Activated CD4-positive, alpha-beta T cell treated with anti-CD3 and anti-CD28 coated beads for 36 hours (primary cell): ENCODE measurements at regions of chr2 and their contacts with region 1.

Region 1: GRCh38 chr2:160022162-160022561 is 40.3 kb downstream of the PLA2R1 start:
- DNase-seq: no peak
- ATAC-seq: no peak
- H3K4me3 Mint-ChIP-seq: no peak overlapping the region
- H3K27ac Mint-ChIP-seq: no peak overlapping the region
- H3K4me1 Mint-ChIP-seq: no peaks in the 10 kb centered on the region
- H3K27me3 Mint-ChIP-seq: peaks cover 2% of the 10 kb centered on the region

Region 2: DNA sequence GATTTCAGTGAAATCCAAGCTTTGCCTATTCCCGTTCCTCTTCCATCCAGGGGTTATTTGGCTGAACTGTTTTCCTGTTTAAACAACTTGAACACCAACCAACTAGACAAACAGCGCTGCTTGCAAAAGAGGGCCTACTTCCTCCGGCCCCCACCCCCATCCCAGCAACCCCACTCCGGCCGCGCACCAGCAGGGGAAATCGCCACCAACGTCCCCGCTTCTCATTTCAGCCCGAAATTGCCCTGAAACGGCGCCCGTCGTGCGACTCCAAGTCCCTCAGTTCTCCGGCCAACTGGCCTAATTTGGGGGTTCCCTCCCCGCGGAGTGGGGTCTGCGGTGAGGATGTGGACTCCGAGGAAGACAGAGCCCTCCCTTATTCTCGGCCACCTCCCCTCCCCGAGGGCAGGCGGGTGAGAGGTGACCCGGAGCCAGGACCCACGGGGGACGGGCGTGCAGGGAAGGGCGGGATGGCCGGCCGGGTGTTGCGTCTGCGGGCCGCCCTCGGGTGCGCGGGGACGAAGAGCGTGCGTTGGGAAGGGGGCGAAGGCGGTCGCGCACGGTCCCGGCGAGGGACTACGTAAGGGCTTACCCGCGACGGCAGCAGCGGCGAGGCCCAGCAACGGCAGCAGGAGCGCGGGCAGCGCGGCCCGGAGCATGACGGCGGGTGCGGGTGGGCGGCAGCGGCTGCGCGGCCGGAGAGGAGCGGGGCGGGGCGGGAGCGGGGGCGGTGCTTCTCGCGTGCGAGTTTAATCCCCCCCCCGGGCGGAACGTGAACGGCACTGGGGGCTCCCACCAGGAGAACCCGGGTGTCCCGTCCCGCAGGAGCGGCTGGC is 224.4 kb before region 1 on chr2 and contains the start of gene CD302:
- CTCF ChIA-PET with region 1: no interaction called
- POLR2A ChIA-PET with region 1: no interaction called
- intact Hi-C with region 1: loop called in 1 of 2 experiments (anchors 5 kb)
- DNase-seq: peak; percentile 60
- ATAC-seq: peak; percentile 71
- H3K4me3 Mint-ChIP-seq: peak within 1 kb of the TSS; percentile 60
- H3K27ac Mint-ChIP-seq: no peak within 1 kb of the TSS
- H3K4me1 Mint-ChIP-seq: peaks cover 17% of the 10 kb centered on the region
- H3K27me3 Mint-ChIP-seq: peaks cover 30% of the 10 kb centered on the region
- total RNA-seq, gene CD302: 0.47 to 0.57 TPM

Region 3: GRCh38 chr2:159840616-159841015 is 181.5 kb before region 1 on chr2:
- CTCF ChIA-PET with region 1: no interaction called
- POLR2A ChIA-PET with region 1: no interaction called
- intact Hi-C with region 1: no loop called
- DNase-seq: no peak
- ATAC-seq: no peak
- H3K4me3 Mint-ChIP-seq: no peak overlapping the region
- H3K27ac Mint-ChIP-seq: no peak overlapping the region
- H3K4me1 Mint-ChIP-seq: no peaks in the 10 kb centered on the region
- H3K27me3 Mint-ChIP-seq: no peaks in the 10 kb centered on the region

Region 4: GRCh38 chr2:159913900-159914299 is 108.3 kb before region 1 on chr2:
- CTCF ChIA-PET with region 1: no interaction called
- POLR2A ChIA-PET with region 1: no interaction called
- intact Hi-C with region 1: no loop called
- DNase-seq: no peak
- ATAC-seq: no peak
- H3K4me3 Mint-ChIP-seq: no peak overlapping the region
- H3K27ac Mint-ChIP-seq: no peak overlapping the region
- H3K4me1 Mint-ChIP-seq: peaks cover 25% of the 10 kb centered on the region
- H3K27me3 Mint-ChIP-seq: peaks cover 7% of the 10 kb centered on the region

Region 5: DNA sequence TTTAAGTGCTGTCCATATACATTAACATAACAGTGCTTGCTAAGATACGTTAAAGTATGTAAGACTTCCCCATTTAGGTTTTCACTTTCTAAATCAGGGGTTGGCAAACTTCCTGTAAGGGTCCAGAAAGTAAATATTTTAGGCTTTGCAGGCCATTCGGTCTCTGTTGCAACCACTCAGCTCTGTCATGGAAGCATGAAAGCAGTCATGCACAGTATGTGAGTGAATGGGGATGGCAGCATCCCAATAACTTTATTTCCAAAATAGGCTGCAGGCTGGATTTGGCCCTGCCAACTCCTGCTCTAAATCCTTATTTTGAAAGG is 88.5 kb before region 1 on chr2:
- CTCF ChIA-PET with region 1: no interaction called
- POLR2A ChIA-PET with region 1: no interaction called
- intact Hi-C with region 1: no loop called
- DNase-seq: no peak
- ATAC-seq: no peak
- H3K4me3 Mint-ChIP-seq: no peak overlapping the region
- H3K27ac Mint-ChIP-seq: no peak overlapping the region
- H3K4me1 Mint-ChIP-seq: peaks cover 7% of the 10 kb centered on the region
- H3K27me3 Mint-ChIP-seq: peaks cover 5% of the 10 kb centered on the region